ENCODE measurements at regions of chr3 and their contacts with region 1.

Region 1: DNA sequence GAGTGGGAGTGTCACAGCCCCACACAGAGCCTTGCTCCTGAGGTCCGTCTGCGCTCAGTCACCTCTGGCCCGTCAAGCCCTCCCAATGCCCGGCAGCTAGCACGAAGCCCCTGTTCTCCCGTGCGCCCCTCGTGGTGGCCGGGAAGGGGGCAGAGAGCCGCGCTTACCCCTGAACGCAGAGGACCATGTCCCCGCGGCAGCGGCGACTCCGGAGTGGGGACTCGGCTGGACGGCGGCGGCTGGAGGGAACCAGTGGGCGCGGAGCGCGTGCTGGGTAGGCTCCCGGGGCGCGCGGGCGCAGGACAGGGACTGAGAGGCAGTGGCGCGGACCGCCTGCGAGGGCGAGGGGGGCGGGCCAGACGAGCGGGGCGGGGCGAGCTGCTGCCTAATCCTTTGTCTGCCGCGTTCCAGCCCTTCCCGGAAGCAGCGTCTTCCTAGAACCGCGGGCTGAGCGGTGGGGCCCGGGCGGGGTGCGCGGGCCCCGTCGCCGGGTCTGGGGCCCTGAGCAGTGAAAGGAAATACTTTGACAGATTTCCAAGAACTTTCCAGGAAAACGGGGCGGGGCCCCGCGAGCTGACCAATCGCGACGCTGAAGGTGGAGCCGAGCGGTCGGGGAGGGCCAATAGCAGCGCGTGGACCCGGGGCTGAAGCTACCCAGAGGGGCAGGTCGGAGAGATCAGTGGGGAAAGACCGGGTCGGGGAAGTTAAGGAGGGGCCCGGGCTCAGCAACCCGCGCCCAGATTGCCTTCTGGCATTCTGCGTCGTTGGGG is at the start of gene CISH:
- DNase-seq: peak; percentile 98
- total RNA-seq, gene CISH: 8.6 to 12.5 TPM

Region 2: DNA sequence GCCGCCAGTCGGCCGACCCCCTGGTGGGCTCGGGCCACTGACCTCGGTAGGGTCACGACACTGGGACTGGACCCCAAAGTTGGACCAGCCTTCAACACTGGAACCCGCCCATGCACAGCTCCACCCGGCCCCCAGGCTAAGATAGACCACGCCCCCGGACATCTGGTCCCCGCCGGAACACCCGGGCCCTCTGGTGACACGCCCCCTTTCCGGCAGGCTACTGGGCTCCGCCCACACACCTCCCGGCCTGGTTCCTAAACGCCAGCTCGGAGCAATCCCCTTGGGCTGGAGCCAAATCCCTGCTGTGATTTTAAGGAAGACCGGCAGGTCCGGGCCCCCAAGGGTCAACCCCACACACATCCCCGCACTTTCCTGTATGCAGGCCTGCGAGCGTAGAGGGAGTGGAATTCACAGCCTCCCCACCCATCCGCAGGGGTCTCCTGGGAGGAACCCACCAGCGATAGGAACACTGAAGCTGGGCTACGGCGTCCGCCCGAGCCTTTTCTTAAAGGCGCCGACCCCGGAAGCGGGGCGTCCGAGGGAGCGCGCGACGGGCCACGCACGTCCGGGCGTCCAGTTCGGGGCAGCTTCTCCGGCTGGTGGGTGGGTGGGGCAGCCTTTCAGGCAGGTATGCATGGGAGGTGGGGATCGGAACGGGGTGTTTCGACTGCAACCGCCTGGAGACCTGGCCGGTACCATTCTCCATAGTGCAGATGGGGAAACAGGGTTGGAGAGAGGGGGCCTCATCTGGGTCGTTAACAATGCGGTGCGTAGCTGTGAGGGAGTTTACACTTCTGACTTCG is 42.5 kb before region 1 on chr3 and contains the start of gene HEMK1:
- intact Hi-C with region 1: loop called (anchors 1 to 2 kb)
- DNase-seq: peak; percentile 99
- total RNA-seq, gene HEMK1: 10.9 to 12.6 TPM

Region 3: DNA sequence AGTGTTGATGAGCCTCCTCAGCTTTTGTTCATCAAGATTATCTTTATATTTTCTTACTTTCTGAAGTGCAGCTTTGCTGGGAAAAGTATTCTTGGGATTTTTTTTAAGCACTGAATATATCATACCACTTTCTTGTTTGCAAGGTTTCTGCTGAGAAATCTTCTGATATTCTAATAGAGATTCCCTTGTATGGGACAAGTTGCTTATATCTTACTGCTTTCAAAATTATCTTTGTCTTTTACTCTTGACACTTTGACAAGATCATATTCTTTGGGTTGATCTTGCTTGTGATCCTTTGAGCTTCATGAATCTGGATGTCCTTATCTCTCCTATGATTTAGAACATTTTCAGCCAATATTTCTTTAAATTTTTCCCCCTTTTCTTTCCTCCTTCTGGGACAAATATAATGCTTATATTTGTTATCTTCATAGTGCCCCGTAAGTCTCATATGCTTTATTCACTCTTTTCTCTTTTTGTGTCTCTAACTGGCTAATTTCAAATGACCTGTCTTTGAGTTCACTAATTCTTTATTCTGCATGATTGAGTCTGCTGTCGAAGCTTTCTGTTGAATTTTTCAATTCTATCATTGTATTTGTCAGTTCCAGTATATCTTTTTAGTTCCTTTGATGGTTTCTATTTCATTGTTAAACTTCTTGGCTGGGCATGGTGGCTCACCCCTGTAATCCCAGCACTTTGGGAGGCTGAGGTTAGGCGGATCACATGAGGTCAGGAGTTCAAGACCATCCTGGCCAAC is 562.0 kb after region 1 on chr3:
- intact Hi-C with region 1: no loop called
- DNase-seq: no peak

Region 4: GRCh38 chr3:51384726-51385473 is 773.3 kb after region 1 on chr3 and contains the start of gene MANF:
- intact Hi-C with region 1: loop called in 1 of 2 experiments (anchors 5 kb)
- DNase-seq: peak; percentile 99
- total RNA-seq, gene MANF: 72.6 to 79.2 TPM

Measured in posterior vena cava (tissue), 2 donors.